ENCODE measurements at regions of chr19 and their contacts with region 1.

Region 1: DNA sequence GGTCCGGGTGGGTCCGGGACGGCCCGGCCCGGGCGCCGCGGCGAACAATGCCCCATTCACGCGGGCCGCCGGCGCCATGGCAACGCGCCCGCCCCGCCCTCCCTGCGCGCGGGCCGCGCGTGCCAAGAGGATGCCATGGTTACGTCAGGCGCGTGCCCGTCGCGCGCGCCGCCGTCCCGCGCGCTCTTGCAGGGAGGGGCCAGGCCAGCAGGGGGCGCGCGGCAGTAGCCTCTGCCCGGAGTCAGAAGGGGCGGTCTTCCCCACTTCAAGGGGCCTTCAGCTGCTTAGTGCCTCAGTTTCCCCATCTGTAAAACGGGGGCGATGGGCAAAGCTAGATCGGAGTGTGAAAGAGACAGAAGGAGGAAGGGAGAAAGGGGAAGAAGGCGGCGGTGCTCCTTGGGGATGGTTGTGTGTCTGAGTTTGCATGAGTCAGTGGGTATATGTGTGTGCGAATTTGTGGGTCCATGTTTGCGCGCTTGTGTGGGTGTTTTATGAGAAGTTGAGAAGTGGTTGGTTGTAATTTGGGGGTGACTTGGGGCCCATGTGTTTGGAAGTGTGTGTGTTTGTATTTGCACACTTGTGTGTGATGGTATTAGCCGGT is 11.6 kb upstream of the NFIX start:
- DNase-seq: peak; percentile 36
- ATAC-seq: peak; percentile 67
- H3K4me3 ChIP-seq: no peak overlapping the region
- H3K27ac ChIP-seq: no peak overlapping the region
- H3K4me1 ChIP-seq: peaks cover 21 to 28% of the 10 kb centered on the region in 2 experiments; a peak in 3 of 4 replicates
- H3K27me3 ChIP-seq: no peaks in the 10 kb centered on the region
- CTCF ChIP-seq: peak; percentile 86 to 94 (median 90)
- POLR2A ChIP-seq: no peak
- RAD21 ChIP-seq: peak; percentile 94

Region 2: DNA sequence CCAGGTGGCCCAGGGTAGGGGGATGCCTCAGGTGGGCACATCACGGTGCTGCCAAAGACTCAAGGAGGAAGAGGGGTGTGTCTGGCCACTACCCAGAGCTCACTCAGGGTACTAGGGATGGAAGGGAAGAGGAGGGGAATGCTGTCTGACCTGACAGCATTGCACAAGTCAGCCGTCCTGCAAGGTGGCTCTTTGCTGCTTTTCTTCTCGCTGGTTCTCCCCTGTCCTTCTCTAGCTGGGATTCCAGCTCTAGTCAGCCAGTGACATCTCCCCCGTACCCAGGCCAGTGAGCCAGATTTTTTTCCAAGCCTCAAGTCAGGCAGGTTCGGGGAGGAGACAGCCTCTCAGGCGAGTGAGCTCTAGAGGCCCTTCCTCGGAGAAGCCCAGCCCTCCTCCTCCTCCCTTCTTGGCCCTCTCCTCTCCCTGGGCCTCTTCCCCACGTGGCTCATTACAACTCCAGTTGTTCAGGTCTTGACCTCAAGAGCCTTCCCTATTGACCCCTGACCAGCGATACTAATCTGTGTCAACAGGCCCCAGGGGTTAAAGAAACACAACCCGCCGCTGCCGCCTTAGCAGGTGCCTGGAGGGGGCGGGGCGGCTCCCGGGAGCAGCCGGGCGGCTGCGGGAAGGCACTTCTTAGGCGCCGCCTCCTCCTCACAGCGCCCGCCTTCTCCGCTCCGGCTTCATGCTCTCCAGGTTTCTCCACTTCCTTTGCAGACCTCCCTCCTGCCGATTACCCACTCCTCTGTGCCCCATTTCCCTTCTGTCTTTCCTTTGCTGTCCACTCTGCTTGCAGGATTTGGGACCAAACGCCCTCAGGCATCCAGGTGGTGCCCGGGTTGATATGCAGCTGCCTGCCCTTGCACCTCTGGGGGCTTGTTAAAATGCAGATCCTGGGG is 67.9 kb after region 1 on chr19:
- CTCF ChIA-PET with region 1: interaction called, 14 read pairs
- POLR2A ChIA-PET with region 1: no interaction called
- RAD21 ChIA-PET with region 1: interaction called in 1 of 2 experiments, 4 read pairs
- intact Hi-C with region 1: no loop called
- DNase-seq: no peak
- ATAC-seq: peak; percentile 45
- H3K4me3 ChIP-seq: peak overlapping the region; percentile 28 to 40
- H3K27ac ChIP-seq: peak overlapping the region; percentile 33; the same call in 1 of the 2 replicates
- H3K4me1 ChIP-seq: peaks cover 58 to 62% of the 10 kb centered on the region in 2 experiments
- H3K27me3 ChIP-seq: no peaks in the 10 kb centered on the region
- CTCF ChIP-seq: no peak
- POLR2A ChIP-seq: no peak
- RAD21 ChIP-seq: no peak

Region 3: DNA sequence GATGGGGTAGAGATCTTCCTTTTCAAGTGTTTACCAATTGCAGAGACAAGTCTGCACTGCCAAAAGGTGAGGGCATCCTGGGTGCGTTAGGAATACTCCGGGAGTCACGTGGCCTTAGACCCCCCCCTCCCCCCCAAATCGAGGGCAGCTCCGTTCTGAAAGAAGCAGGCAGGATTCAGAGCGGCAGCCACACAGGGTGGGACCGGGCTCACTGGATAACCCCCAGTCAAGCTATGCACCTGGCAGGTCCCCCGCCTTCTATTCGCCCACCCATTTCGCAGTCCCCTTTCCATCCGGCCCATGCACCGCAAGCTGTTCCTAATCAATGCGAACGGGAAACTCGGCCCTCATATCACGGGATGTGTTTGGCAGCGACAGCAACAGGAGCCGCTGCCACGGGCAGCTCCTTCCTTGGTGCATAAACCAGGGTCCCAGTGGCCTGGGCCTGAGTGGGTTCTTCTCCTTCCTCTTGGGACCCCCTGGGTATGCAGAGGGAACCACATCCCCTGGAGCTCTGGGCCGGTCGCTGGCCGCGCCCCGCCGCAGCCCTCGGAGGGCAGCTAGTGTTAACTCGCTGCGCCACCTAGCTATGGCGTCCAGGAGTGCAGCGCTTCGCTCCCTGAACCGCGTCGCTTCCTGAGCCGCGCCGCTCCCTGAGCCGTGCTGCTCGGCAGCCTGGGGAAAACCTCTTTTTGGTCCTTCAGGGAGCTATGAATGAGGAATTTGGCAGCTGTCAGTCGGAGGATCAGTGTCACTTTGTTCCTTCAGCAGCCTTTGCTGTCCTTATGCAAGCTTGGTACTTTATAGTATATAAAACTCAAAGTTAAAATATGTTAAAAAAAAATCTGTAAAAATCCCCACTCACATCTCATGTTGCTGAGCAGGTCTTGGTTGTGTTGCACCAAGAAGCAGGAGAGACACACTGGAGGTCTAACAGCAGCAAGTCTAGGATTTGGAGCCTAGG is 77.6 kb after region 1 on chr19:
- CTCF ChIA-PET with region 1: interaction called, 59 read pairs
- POLR2A ChIA-PET with region 1: interaction called, 4 read pairs
- RAD21 ChIA-PET with region 1: interaction called, 3 to 10 read pairs
- intact Hi-C with region 1: loop called (anchors 1 kb)
- DNase-seq: peak; percentile 59
- ATAC-seq: peak; percentile 86
- H3K4me3 ChIP-seq: peak overlapping the region; percentile 51 to 66
- H3K27ac ChIP-seq: peak overlapping the region; percentile 78
- H3K4me1 ChIP-seq: peaks cover 41 to 56% of the 10 kb centered on the region in 2 experiments
- H3K27me3 ChIP-seq: no peaks in the 10 kb centered on the region
- CTCF ChIP-seq: peak; percentile 87 to 97 (median 92)
- POLR2A ChIP-seq: no peak
- RAD21 ChIP-seq: peak; percentile 99

Region 4: DNA sequence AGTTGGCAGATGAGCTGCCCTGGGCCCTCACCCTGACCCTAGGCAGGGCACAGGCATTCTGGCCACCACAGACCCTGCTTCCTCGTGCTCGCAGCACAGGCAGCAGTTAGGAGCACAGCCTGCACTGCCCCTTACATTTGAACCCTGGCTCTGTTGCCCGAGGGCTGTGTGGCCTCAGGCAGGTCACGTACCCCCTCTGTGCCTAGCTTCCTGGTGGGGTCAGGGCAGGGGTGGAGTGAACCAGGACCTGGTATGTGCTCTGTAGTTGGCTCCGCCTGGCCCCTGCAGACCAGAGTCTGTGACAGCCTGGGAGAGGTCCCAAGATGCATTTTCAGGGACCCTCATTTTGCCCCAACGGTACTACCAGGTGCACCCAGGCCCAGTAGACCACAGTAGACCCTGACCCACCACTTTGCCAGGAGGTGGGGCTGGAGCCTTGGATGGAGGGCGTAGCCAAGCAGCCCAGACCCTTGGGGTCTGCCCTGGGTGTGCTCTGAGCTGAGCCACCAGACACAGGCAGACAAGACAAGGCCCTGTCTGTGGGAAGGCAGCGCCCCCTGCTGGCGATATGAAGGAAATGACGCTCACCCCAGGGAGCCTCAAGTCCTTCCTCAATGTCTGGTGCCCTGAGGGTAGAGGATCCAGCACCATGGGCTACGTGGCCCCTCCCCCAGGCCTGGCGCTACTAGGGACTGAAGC is 109.9 kb after region 1 on chr19:
- CTCF ChIA-PET with region 1: interaction called, 94 read pairs
- POLR2A ChIA-PET with region 1: interaction called, 3 read pairs
- RAD21 ChIA-PET with region 1: interaction called, 20 to 25 read pairs
- intact Hi-C with region 1: loop called (anchors 1 kb)
- DNase-seq: peak; percentile 70
- ATAC-seq: peak; percentile 80
- H3K4me3 ChIP-seq: no peak overlapping the region
- H3K27ac ChIP-seq: no peak overlapping the region; the same call in 1 of the 2 replicates
- H3K4me1 ChIP-seq: peaks cover 6 to 27% of the 10 kb centered on the region in 2 experiments; a peak in 3 of 4 replicates
- H3K27me3 ChIP-seq: no peaks in the 10 kb centered on the region
- CTCF ChIP-seq: peak; percentile 84 to 94 (median 92)
- POLR2A ChIP-seq: no peak
- RAD21 ChIP-seq: peak; percentile 99

Region 5: GRCh38 chr19:13262450-13262849 is 278.8 kb after region 1 on chr19:
- CTCF ChIA-PET with region 1: interaction called, 14 read pairs
- POLR2A ChIA-PET with region 1: no interaction called
- RAD21 ChIA-PET with region 1: no interaction called
- intact Hi-C with region 1: loop called (anchors 1 kb)
- DNase-seq: no peak
- ATAC-seq: peak; percentile 55
- H3K4me3 ChIP-seq: no peak overlapping the region
- H3K27ac ChIP-seq: no peak overlapping the region
- H3K4me1 ChIP-seq: peaks cover 24 to 35% of the 10 kb centered on the region in 2 experiments
- H3K27me3 ChIP-seq: no peaks in the 10 kb centered on the region
- CTCF ChIP-seq: peak; percentile 27 to 76 (median 64); a peak in 5 of 6 replicates
- POLR2A ChIP-seq: no peak
- RAD21 ChIP-seq: peak; percentile 79

Measured in HCT116 (cell line).